Stomach (tissue), 19 donors: ENCODE measurements at regions of chr7 and their contacts with region 1.

Region 1: DNA sequence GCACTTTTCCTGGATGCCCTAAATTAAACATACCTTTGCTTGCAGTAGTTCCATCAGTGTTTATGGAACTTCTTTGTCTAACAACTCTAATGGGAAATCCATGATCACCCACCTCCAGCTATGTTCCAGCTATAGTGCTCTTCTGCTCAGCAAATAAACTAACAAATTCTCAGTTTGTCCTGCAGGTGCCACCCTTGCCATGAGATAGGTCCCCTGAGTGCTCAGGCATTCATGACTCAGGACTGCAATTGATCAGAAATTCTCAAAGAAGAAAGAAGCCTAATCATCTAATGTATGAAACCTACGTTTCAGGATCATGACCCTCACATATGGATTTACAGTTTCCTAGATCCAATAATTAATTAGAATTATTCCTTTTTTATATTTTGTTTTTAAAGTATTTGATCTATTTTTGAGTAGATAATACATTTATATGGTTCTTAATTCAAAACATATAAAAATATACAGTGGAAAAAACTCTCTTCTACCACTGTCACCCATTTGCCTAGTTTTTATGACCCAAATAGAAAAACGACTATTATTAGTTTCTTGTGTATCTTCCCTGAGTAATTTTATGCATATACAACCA is 48.7 kb upstream of the DYNC1I1 start:
- DNase-seq: peak in 1 of 2 donors; percentile 78
- H3K4me3 ChIP-seq: no peak overlapping the region
- H3K27ac ChIP-seq: no peak overlapping the region
- H3K4me1 ChIP-seq: no peaks in the 10 kb centered on the region
- H3K27me3 ChIP-seq: peaks cover 0 to 10% (median 0%) of the 10 kb centered on the region in 3 donors
- CTCF ChIP-seq: peak in 5 of 7 experiments; percentile 23 to 68 (median 35)
- EP300 ChIP-seq: no peak
- POLR2A ChIP-seq: no peak

Region 2: GRCh38 chr7:95553939-95554338 is 169.7 kb before region 1 on chr7:
- intact Hi-C with region 1: no loop called
- DNase-seq: no peak
- H3K4me3 ChIP-seq: no peak overlapping the region
- H3K27ac ChIP-seq: no peak overlapping the region
- H3K4me1 ChIP-seq: peaks cover 22 to 30% (median 26%) of the 10 kb centered on the region in 4 donors
- H3K27me3 ChIP-seq: no peaks in the 10 kb centered on the region
- CTCF ChIP-seq: no peak
- EP300 ChIP-seq: no peak
- POLR2A ChIP-seq: no peak

Region 3: GRCh38 chr7:95871078-95871782 is 147.5 kb after region 1 on chr7:
- intact Hi-C with region 1: loop called (anchors 10 kb)
- DNase-seq: peak in 1 of 2 donors; percentile 72
- H3K4me3 ChIP-seq: no peak overlapping the region
- H3K27ac ChIP-seq: no peak overlapping the region
- H3K4me1 ChIP-seq: peaks cover 0 to 18% (median 5%) of the 10 kb centered on the region in 4 donors
- H3K27me3 ChIP-seq: no peaks in the 10 kb centered on the region
- CTCF ChIP-seq: peak in 5 of 7 experiments; percentile 35 to 66 (median 40)
- EP300 ChIP-seq: no peak
- POLR2A ChIP-seq: no peak

Region 4: GRCh38 chr7:96521068-96521894 is 797.6 kb after region 1 on chr7:
- intact Hi-C with region 1: no loop called
- DNase-seq: peak in 1 of 2 donors; percentile 9
- H3K4me3 ChIP-seq: no peak overlapping the region
- H3K27ac ChIP-seq: no peak overlapping the region
- H3K4me1 ChIP-seq: no peaks in the 10 kb centered on the region
- H3K27me3 ChIP-seq: no peaks in the 10 kb centered on the region
- CTCF ChIP-seq: no peak
- EP300 ChIP-seq: no peak
- POLR2A ChIP-seq: no peak